ENCODE measurements at regions of chr2 and their contacts with region 1.

Region 1: DNA sequence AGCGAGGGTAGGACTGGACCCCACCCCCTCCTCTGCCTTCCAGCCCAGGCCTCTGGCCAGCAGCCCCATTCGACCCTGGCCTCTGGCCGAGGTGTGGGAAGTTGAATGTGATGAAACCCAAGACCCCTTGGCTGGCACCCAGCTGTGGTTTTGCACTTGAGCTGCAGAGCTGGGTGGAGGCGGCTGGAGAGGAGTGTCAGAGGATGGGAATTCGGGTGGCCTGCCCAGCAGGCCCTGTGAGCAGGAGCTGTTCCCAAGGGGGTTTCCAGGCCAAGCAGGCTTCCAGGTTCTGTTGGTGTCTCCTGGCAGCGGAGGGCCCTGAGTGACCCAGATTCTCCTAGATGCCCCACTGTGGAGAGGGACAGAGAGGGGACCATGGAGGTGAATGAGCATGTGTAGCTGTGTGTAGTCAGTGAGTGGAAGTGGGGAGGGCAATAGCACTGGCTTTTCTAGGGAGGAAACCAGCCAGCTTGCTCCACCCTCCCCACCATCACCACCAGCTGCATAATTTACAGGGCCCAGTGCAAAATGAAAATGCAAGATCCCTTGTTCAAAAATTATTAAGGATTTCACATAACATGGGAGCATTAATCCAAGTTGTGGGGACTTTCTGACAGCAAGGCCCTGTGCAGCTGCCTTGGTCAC is 172.2 kb upstream of the HAAO start:
- DNase-seq: peak in 2 of 3 donors; percentile 65 to 69
- H3K4me3 ChIP-seq: peak overlapping the region in 2 of 7 experiments; percentile 35 to 58
- H3K27ac ChIP-seq: peak overlapping the region; percentile 88 to 91
- H3K4me1 ChIP-seq: peaks cover 35 to 99% (median 95%) of the 10 kb centered on the region in 4 experiments
- H3K27me3 ChIP-seq: no peaks in the 10 kb centered on the region

Region 2: GRCh38 chr2:41709702-41710599 is 1254.6 kb before region 1 on chr2:
- CTCF ChIA-PET with region 1: no interaction called
- POLR2A ChIA-PET with region 1: no interaction called
- DNase-seq: no peak
- H3K4me3 ChIP-seq: no peak overlapping the region
- H3K27ac ChIP-seq: no peak overlapping the region
- H3K4me1 ChIP-seq: no peaks in the 10 kb centered on the region
- H3K27me3 ChIP-seq: no peaks in the 10 kb centered on the region

Region 3: DNA sequence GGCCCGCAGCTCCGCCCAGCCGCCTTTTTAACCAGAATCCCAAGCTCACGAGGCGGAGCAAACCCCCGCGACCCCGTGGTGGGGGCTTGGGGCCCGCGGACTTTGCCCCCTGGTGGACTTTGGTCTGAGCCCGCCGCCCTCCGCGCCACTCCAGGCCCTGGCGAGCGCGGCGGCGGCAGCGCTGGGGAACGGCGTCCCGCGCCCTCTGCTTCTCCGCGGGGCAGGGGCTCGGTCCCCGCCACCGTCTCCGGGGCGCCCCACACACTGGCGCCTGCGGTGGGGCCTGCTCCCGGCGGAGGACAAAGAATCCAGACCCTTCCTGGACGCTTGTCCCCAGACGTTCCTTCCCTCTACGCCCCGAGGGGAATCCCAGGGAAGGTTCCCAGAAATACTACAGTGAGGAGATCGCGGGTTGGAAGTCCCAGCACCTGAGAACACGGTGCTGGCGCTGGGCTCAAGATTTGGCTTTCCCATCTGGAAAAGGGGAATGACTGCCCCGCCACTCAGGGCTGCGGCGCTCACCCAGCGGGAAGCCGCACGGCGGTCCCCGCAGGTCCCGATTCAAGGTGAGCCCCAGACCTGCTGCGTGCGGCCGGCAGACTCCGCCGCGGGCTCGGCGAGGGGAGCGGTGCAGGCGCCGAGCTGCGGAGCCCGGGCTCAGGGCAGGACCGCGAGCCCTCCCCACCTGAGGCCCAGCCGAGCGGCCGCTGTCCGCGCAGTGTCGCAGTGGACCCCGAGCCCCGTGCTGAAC is 171.8 kb before region 1 on chr2 and contains the start of gene HAAO:
- CTCF ChIA-PET with region 1: no interaction called
- POLR2A ChIA-PET with region 1: no interaction called
- DNase-seq: peak in 2 of 3 donors; percentile 21 to 37
- H3K4me3 ChIP-seq: peak within 1 kb of the TSS; percentile 48 to 91 (median 79)
- H3K27ac ChIP-seq: no peak within 1 kb of the TSS
- H3K4me1 ChIP-seq: peaks cover 0 to 22% (median 20%) of the 10 kb centered on the region in 4 experiments
- H3K27me3 ChIP-seq: no peaks in the 10 kb centered on the region

Region 4: GRCh38 chr2:42954227-42954962 is 10.2 kb before region 1 on chr2:
- CTCF ChIA-PET with region 1: interaction called, 52 read pairs
- POLR2A ChIA-PET with region 1: interaction called, 62 read pairs
- DNase-seq: no peak
- H3K4me3 ChIP-seq: no peak overlapping the region
- H3K27ac ChIP-seq: peak overlapping the region in 1 of 2 experiments; percentile 70
- H3K4me1 ChIP-seq: peaks cover 14 to 95% (median 89%) of the 10 kb centered on the region in 4 experiments
- H3K27me3 ChIP-seq: no peaks in the 10 kb centered on the region

Region 5: GRCh38 chr2:43032213-43033015 is 67.9 kb after region 1 on chr2:
- CTCF ChIA-PET with region 1: no interaction called
- POLR2A ChIA-PET with region 1: no interaction called
- DNase-seq: no peak
- H3K4me3 ChIP-seq: no peak overlapping the region
- H3K27ac ChIP-seq: no peak overlapping the region
- H3K4me1 ChIP-seq: peaks cover 0 to 16% (median 7%) of the 10 kb centered on the region in 4 experiments
- H3K27me3 ChIP-seq: no peaks in the 10 kb centered on the region

Measured in common myeloid progenitor, CD34-positive (primary cell).